ENCODE measurements at regions of chr7 and their contacts with region 1.

Region 1: GRCh38 chr7:79176859-79177477 is 276.5 kb downstream of the MAGI2 start:
- DNase-seq: no peak
- H3K4me3 ChIP-seq: no peak overlapping the region
- H3K27ac ChIP-seq: no peak overlapping the region
- H3K4me1 ChIP-seq: no peaks in the 10 kb centered on the region
- H3K27me3 ChIP-seq: no peaks in the 10 kb centered on the region
- CTCF ChIP-seq: peak; percentile 39 to 65 (median 51)

Region 2: GRCh38 chr7:77940647-77941046 is 1236.3 kb before region 1 on chr7:
- intact Hi-C with region 1: loop called (anchors 10 kb)
- DNase-seq: no peak
- H3K4me3 ChIP-seq: no peak overlapping the region
- H3K27ac ChIP-seq: no peak overlapping the region
- H3K4me1 ChIP-seq: no peaks in the 10 kb centered on the region
- H3K27me3 ChIP-seq: no peaks in the 10 kb centered on the region
- CTCF ChIP-seq: peak; percentile 26 to 69 (median 50)

Region 3: GRCh38 chr7:78134256-78134655 is 1042.7 kb before region 1 on chr7:
- intact Hi-C with region 1: loop called (anchors 5 kb)
- DNase-seq: no peak
- H3K4me3 ChIP-seq: no peak overlapping the region
- H3K27ac ChIP-seq: no peak overlapping the region
- H3K4me1 ChIP-seq: no peaks in the 10 kb centered on the region
- H3K27me3 ChIP-seq: no peaks in the 10 kb centered on the region
- CTCF ChIP-seq: peak in 2 of 3 experiments; percentile 44 to 65

Region 4: DNA sequence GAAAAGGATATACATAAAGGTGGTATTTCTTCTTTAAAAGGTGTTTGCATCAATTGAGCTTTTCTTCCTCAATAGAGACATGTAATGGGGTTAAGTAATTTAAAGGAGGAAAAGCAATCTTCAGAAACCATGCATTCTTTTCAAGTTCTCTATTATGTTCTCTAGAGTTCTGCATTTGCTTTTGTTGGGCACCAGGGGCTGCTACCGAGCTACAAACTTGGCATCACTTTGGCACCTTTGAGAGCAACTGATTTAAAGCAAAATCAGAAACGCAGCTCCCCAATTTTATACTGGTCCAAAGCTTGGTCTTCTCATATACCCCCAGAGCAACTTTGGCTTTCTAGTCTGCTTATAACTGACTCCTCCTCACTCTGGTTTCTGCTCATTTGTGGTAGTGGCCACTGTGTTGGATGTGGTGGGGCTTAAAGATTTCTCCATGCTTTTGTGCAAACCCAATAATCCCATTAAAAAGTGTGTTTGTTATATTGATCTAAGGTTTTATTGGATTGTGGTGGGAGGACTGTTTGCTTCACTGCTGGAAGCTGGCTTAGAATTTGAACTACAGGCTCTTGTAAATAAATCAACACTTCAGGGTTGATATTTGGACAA is 666.3 kb before region 1 on chr7:
- intact Hi-C with region 1: loop called (anchors 1 kb)
- DNase-seq: no peak
- H3K4me3 ChIP-seq: no peak overlapping the region
- H3K27ac ChIP-seq: no peak overlapping the region
- H3K4me1 ChIP-seq: no peaks in the 10 kb centered on the region
- H3K27me3 ChIP-seq: no peaks in the 10 kb centered on the region
- CTCF ChIP-seq: peak; percentile 34 to 55 (median 52)

Region 5: GRCh38 chr7:79159040-79159664 is 17.8 kb before region 1 on chr7:
- intact Hi-C with region 1: no loop called
- DNase-seq: no peak
- H3K4me3 ChIP-seq: no peak overlapping the region
- H3K27ac ChIP-seq: no peak overlapping the region
- H3K4me1 ChIP-seq: peaks cover 0 to 5% of the 10 kb centered on the region in 2 donors
- H3K27me3 ChIP-seq: no peaks in the 10 kb centered on the region
- CTCF ChIP-seq: no peak

Measured in ascending aorta (tissue), 2 donors.